Right ventricle myocardium superior (tissue), 1 donor: ENCODE measurements at regions of chr22 and their contacts with region 1.

Region 1: GRCh38 chr22:24165673-24166072 is 15.6 kb upstream of the SUSD2 start:
- DNase-seq: no peak
- ATAC-seq: no peak

Region 2: GRCh38 chr22:24001314-24001713 is 164.4 kb before region 1 on chr22:
- intact Hi-C with region 1: loop called (anchors 5 kb)
- DNase-seq: no peak
- ATAC-seq: no peak

Region 3: GRCh38 chr22:24028533-24028932 is 137.1 kb before region 1 on chr22:
- intact Hi-C with region 1: no loop called
- DNase-seq: no peak
- ATAC-seq: no peak

Region 4: DNA sequence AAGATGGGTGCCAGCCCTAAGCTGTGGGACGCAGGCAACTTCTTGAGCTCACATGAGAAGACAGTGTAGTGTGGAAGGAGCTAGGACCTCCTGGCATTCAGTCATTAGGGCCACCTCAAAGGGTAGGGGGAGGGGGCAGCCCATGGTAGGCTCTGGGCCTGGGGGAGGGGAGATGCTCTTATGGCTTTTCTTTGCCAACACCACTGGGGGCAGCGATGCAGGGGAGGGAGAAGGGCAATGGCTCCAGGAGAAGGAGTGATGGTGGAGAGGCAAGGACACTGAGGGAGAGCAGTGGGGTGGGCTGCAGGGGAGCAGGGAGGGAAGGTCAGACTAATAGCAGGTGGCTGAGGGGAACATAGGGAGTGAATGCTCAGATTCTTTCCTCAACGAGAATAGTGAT is 47.7 kb before region 1 on chr22:
- intact Hi-C with region 1: loop called (anchors 5 kb)
- DNase-seq: peak; percentile 8
- ATAC-seq: no peak